ENCODE measurements at regions of chr16 and their contacts with region 1.

Region 1: DNA sequence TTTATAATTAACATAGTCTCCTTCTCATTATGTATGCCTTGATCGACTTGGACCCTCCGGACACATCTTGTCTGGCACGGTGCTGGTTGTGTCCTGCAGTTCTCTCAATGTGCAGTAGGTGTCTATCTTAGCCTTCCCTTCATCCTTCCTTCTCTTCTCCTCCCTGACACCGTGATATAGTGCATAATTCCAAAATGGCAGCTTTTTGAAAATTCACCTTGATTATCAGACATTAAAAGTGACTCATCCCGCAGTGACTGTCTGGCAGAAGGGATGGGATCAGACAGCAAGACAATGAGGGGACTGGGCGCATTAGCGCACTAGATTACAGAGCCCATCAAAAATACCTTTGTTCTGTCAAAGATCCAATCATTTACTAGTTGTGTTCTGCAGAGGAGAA is 70.0 kb upstream of the PMFBP1 start:
- DNase-seq: peak in 6 of 10 donors; percentile 10 to 88 (median 28)

Region 2: DNA sequence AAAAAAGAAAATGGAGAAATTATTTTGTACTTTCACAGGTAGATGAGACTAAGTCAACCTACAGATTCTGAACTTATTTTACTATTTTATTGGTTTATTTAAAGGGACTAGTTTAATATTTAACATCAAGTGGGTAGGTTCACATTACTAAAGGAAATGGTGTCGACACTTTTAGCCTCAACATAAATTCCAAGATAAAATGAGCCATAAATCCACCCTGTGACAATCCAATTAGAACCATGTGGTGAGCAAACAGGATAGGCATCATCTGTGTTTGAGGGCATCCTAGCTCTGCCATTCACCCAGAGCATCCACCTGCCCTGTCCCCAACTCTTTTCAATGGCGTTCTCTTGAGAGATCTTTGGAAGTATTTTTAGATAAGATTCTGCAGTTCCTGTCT is 22.8 kb after region 1 on chr16:
- intact Hi-C with region 1: no loop called
- DNase-seq: no peak

Region 3: DNA sequence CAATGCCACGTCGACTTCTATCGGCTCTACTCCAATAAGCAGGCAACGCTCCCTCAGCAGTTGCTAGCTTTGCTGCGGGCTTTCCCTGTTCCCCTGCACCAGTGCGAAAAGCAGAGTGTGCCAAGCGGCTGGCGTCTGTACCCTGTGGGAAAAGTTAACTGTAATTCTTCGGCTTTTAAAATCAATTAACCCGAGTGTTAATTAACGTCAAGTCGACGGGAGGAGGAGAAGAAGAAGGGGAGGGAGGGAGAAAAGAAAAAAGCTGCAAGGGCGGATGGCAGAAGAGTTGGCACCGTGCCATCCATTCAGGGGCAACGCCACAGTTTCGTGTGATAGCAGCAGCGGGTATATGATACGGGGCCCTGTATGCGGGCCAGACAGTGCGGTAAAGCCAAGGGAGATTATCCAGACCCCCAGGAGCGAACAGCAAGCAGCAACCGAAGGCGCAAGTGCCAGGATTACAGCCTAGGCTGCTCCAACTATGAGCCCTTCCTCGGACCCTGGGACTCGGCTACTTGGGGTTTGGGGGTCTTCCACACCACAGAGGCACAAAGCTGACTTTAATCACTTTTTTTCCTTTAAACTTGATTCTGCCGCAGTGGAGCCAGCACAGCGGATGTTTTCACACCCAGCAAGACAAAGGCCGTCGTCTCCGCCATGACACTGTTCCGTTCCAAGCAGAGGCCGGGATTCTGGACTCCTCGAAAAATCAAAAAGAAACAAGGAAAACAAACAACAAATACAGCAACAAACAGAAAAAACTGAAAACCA is 183.8 kb after region 1 on chr16:
- intact Hi-C with region 1: loop called (anchors 10 kb)
- DNase-seq: peak; percentile 47 to 94 (median 65)

Region 4: GRCh38 chr16:72467157-72467759 is 225.3 kb after region 1 on chr16:
- intact Hi-C with region 1: loop called (anchors 5 kb)
- DNase-seq: no peak